Naive thymus-derived CD4-positive, alpha-beta T cell (primary cell): ENCODE measurements at regions of chr13 and their contacts with region 1.

Region 1: DNA sequence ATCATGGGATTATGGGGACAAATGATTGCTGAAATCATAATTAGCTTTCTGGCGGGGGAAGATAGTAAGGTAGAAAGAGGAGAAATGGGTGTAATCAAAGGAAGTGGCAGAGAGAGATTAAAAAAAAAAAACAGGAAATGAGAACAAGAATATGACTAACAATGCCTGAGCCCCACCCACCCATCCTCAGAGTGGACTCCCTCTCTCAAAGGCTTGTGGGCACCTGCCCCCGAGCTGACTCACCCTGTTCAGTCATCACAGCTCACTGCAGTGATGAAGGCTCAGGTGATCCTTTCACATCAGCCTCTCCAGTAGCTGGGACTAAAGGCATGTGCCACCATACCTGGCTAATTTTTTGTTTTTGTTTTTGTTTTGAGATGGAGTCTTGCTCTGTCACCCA is 26.4 kb upstream of the TPT1 start:
- DNase-seq: peak; percentile 38 to 93 (median 82)
- ATAC-seq: peak; percentile 99
- H3K4me3 ChIP-seq: no peak overlapping the region
- H3K4me3 Mint-ChIP-seq: peak overlapping the region; percentile 48 to 80 (median 67)
- H3K27ac ChIP-seq: peak overlapping the region; percentile 31
- H3K27ac Mint-ChIP-seq: peak overlapping the region; percentile 81 to 96 (median 90)
- H3K4me1 ChIP-seq: peaks cover 25 to 27% of the 10 kb centered on the region in 2 donors
- H3K4me1 Mint-ChIP-seq: peaks cover 48 to 62% (median 60%) of the 10 kb centered on the region in 7 donors
- H3K27me3 ChIP-seq: no peaks in the 10 kb centered on the region
- H3K27me3 Mint-ChIP-seq: no peaks in the 10 kb centered on the region

Region 2: GRCh38 chr13:44088991-44089413 is 1278.4 kb before region 1 on chr13:
- CTCF ChIA-PET with region 1: no interaction called
- POLR2A ChIA-PET with region 1: no interaction called
- intact Hi-C with region 1: no loop called
- DNase-seq: peak in 4 of 9 donors; percentile 5 to 28 (median 12)
- ATAC-seq: peak; percentile 54
- H3K4me3 ChIP-seq: no peak overlapping the region
- H3K4me3 Mint-ChIP-seq: peak overlapping the region in 5 of 10 donors; percentile 15 to 44 (median 16)
- H3K27ac ChIP-seq: no peak overlapping the region
- H3K27ac Mint-ChIP-seq: peak overlapping the region in 2 of 9 donors; percentile 46 to 54
- H3K4me1 ChIP-seq: peaks cover 0 to 8% of the 10 kb centered on the region in 2 donors
- H3K4me1 Mint-ChIP-seq: peaks cover 13 to 35% (median 19%) of the 10 kb centered on the region in 7 donors
- H3K27me3 ChIP-seq: no peaks in the 10 kb centered on the region
- H3K27me3 Mint-ChIP-seq: peaks cover 0 to 23% (median 0%) of the 10 kb centered on the region in 5 donors

Region 3: GRCh38 chr13:45332036-45332830 is 35.1 kb before region 1 on chr13:
- CTCF ChIA-PET with region 1: interaction called, 4 read pairs
- POLR2A ChIA-PET with region 1: interaction called, 112 read pairs
- intact Hi-C with region 1: loop called in 1 of 2 experiments (anchors 5 kb)
- DNase-seq: no peak
- ATAC-seq: no peak
- H3K4me3 ChIP-seq: no peak overlapping the region
- H3K4me3 Mint-ChIP-seq: peak overlapping the region in 3 of 10 donors; percentile 7 to 33 (median 20)
- H3K27ac ChIP-seq: peak overlapping the region; percentile 32
- H3K27ac Mint-ChIP-seq: peak overlapping the region in 8 of 9 donors; percentile 53 to 92 (median 84)
- H3K4me1 ChIP-seq: peaks cover 49 to 63% of the 10 kb centered on the region in 2 donors
- H3K4me1 Mint-ChIP-seq: peaks cover 66 to 99% (median 89%) of the 10 kb centered on the region in 7 donors
- H3K27me3 ChIP-seq: no peaks in the 10 kb centered on the region
- H3K27me3 Mint-ChIP-seq: no peaks in the 10 kb centered on the region

Region 4: GRCh38 chr13:45393941-45394570 is 26.7 kb after region 1 on chr13:
- CTCF ChIA-PET with region 1: interaction called, 37 read pairs
- POLR2A ChIA-PET with region 1: interaction called, 8 read pairs
- intact Hi-C with region 1: loop called (anchors 1 kb)
- DNase-seq: peak in 1 of 9 donors; percentile 33
- ATAC-seq: peak; percentile 52
- H3K4me3 ChIP-seq: no peak overlapping the region
- H3K4me3 Mint-ChIP-seq: no peak overlapping the region
- H3K27ac ChIP-seq: no peak overlapping the region
- H3K27ac Mint-ChIP-seq: peak overlapping the region in 8 of 9 donors; percentile 16 to 95 (median 72)
- H3K4me1 ChIP-seq: peaks cover 10 to 20% of the 10 kb centered on the region in 2 donors
- H3K4me1 Mint-ChIP-seq: peaks cover 30 to 49% (median 48%) of the 10 kb centered on the region in 7 donors
- H3K27me3 ChIP-seq: no peaks in the 10 kb centered on the region
- H3K27me3 Mint-ChIP-seq: no peaks in the 10 kb centered on the region

Region 5: GRCh38 chr13:45417790-45418534 is 50.6 kb after region 1 on chr13 and contains the start of gene SLC25A30:
- CTCF ChIA-PET with region 1: interaction called, 16 read pairs
- POLR2A ChIA-PET with region 1: interaction called, 17 read pairs
- intact Hi-C with region 1: loop called (anchors 1 kb)
- DNase-seq: peak; percentile 73 to 90 (median 87)
- ATAC-seq: peak; percentile 97
- H3K4me3 ChIP-seq: peak within 1 kb of the TSS; percentile 97
- H3K4me3 Mint-ChIP-seq: peak within 1 kb of the TSS; percentile 90 to 98 (median 96)
- H3K27ac ChIP-seq: peak within 1 kb of the TSS; percentile 79
- H3K27ac Mint-ChIP-seq: peak within 1 kb of the TSS; percentile 92 to 99 (median 96)
- H3K4me1 ChIP-seq: peaks cover 4 to 21% of the 10 kb centered on the region in 2 donors
- H3K4me1 Mint-ChIP-seq: peaks cover 0 to 36% (median 27%) of the 10 kb centered on the region in 7 donors
- H3K27me3 ChIP-seq: no peaks in the 10 kb centered on the region
- H3K27me3 Mint-ChIP-seq: no peaks in the 10 kb centered on the region
- total RNA-seq, gene SLC25A30: 13.3 to 29.4 (median 23.6) TPM

Region 6: GRCh38 chr13:45490068-45490467 is 122.7 kb after region 1 on chr13:
- CTCF ChIA-PET with region 1: interaction called, 6 read pairs
- POLR2A ChIA-PET with region 1: no interaction called
- intact Hi-C with region 1: loop called in 1 of 2 experiments (anchors 1 kb)
- DNase-seq: peak in 7 of 9 donors; percentile 20 to 52 (median 33)
- ATAC-seq: peak; percentile 67
- H3K4me3 ChIP-seq: no peak overlapping the region
- H3K4me3 Mint-ChIP-seq: no peak overlapping the region
- H3K27ac ChIP-seq: no peak overlapping the region
- H3K27ac Mint-ChIP-seq: peak overlapping the region in 2 of 9 donors; percentile 16 to 31
- H3K4me1 ChIP-seq: no peaks in the 10 kb centered on the region
- H3K4me1 Mint-ChIP-seq: peaks cover 0 to 6% (median 4%) of the 10 kb centered on the region in 7 donors
- H3K27me3 ChIP-seq: no peaks in the 10 kb centered on the region
- H3K27me3 Mint-ChIP-seq: no peaks in the 10 kb centered on the region

Region 7: GRCh38 chr13:46295491-46296114 is 928.2 kb after region 1 on chr13:
- CTCF ChIA-PET with region 1: no interaction called
- POLR2A ChIA-PET with region 1: no interaction called
- intact Hi-C with region 1: loop called in 1 of 2 experiments (anchors 10 kb)
- DNase-seq: peak in 8 of 9 donors; percentile 28 to 90 (median 88)
- ATAC-seq: peak; percentile 94
- H3K4me3 ChIP-seq: peak overlapping the region; percentile 12
- H3K4me3 Mint-ChIP-seq: peak overlapping the region; percentile 4 to 87 (median 76)
- H3K27ac ChIP-seq: peak overlapping the region; percentile 77
- H3K27ac Mint-ChIP-seq: peak overlapping the region; percentile 92 to 99 (median 96)
- H3K4me1 ChIP-seq: peaks cover 35 to 52% of the 10 kb centered on the region in 2 donors
- H3K4me1 Mint-ChIP-seq: peaks cover 36 to 73% (median 68%) of the 10 kb centered on the region in 7 donors
- H3K27me3 ChIP-seq: no peaks in the 10 kb centered on the region
- H3K27me3 Mint-ChIP-seq: no peaks in the 10 kb centered on the region